Pancreas (tissue), 10 donors: ENCODE measurements at regions of chr11 and their contacts with region 1.

Region 1: DNA sequence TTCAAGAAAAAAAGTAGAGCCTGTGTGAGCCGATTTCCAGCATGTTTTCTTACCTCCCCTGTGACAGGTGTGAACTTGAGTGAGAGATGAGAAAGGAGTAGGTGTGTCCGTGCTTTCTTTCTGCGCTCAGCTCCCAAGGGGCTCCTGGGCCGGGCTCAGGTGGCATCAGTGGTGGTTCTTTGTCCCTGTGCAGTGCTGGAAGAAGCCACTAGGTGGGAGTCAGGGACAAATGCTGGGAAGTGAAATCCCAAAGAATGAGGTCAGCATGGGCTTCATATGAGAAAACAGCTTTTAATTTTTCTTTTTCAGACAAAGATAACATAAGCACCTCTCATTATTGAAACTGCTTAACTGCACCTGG is 57.8 kb downstream of the PPFIBP2 start:
- DNase-seq: peak; percentile 63 to 86 (median 74)
- ATAC-seq: peak; percentile 90 to 95 (median 94)
- H3K4me3 ChIP-seq: no peak overlapping the region
- H3K27ac ChIP-seq: peak overlapping the region in 2 of 4 donors; percentile 46 to 60
- H3K4me1 ChIP-seq: peaks cover 9 to 21% (median 15%) of the 10 kb centered on the region in 3 donors
- H3K27me3 ChIP-seq: no peaks in the 10 kb centered on the region
- CTCF ChIP-seq: peak; percentile 80 to 96 (median 94)

Region 2: GRCh38 chr11:7657306-7658025 is 85.8 kb after region 1 on chr11:
- intact Hi-C with region 1: loop called in 2 of 3 experiments (anchors 2 to 5 kb)
- DNase-seq: peak in 4 of 6 donors; percentile 50 to 73 (median 52)
- ATAC-seq: peak; percentile 85 to 98 (median 97)
- H3K4me3 ChIP-seq: no peak overlapping the region
- H3K27ac ChIP-seq: no peak overlapping the region
- H3K4me1 ChIP-seq: no peaks in the 10 kb centered on the region
- H3K27me3 ChIP-seq: no peaks in the 10 kb centered on the region
- CTCF ChIP-seq: peak in 3 of 4 donors; percentile 16 to 28 (median 23)

Region 3: DNA sequence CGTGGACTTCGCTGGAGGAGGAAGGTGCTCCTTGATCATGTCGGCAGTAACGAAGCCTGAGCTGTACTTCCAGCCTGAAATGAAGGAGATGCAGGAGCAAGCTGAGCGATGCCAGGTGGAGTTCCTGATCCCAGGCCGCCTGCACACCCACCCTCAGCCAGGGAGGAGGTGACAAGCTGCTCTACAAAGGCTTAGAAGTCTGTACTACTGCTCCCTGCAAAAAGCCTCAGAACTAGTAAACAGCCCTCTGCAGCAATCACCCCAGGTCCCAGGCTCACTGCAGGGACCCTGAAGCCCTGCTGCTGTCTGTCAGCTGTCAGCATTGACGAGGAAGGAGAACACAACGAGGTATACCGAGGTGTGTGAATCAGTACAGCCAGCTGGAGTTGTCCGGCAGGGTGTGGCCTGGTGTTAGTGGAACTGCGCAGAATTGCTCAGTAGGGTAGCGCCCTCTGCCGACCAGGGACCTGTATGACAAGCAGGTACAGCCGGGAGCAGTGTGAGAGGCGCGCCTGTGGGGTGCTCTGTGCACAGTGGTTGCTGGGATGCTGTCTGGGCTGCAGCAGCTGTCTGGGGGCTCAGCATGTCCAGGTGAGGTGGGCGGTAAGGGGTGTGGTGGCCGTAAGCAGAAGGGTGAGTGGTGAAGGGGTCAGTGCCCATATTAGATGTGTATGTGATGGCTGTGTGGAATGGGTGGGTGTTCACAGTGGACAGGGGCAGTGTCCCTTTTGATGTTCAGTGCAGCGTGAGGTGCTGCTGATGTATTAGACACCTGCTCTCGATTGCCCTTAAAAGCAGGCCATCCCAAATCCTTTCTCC is 94.1 kb after region 1 on chr11:
- intact Hi-C with region 1: loop called in 1 of 3 experiments (anchors 5 kb)
- DNase-seq: peak; percentile 74 to 98 (median 90)
- ATAC-seq: peak; percentile 97 to 100 (median 100)
- H3K4me3 ChIP-seq: no peak overlapping the region
- H3K27ac ChIP-seq: no peak overlapping the region
- H3K4me1 ChIP-seq: no peaks in the 10 kb centered on the region
- H3K27me3 ChIP-seq: no peaks in the 10 kb centered on the region
- CTCF ChIP-seq: peak; percentile 81 to 94 (median 86)

Region 4: GRCh38 chr11:7896009-7896785 is 324.6 kb after region 1 on chr11:
- intact Hi-C with region 1: no loop called
- DNase-seq: peak in 2 of 6 donors; percentile 9 to 24
- ATAC-seq: peak; percentile 33 to 48 (median 42)
- H3K4me3 ChIP-seq: no peak overlapping the region
- H3K27ac ChIP-seq: peak overlapping the region in 1 of 4 donors; percentile 63
- H3K4me1 ChIP-seq: peaks cover 19 to 37% (median 36%) of the 10 kb centered on the region in 3 donors
- H3K27me3 ChIP-seq: no peaks in the 10 kb centered on the region
- CTCF ChIP-seq: no peak